ENCODE measurements at regions of chr14 and their contacts with region 1.

Region 1: GRCh38 chr14:31360919-31361662 is 59.3 kb downstream of the HEATR5A start:
- DNase-seq: no peak
- ATAC-seq: no peak
- H3K4me3 Mint-ChIP-seq: no peak overlapping the region
- H3K27ac Mint-ChIP-seq: no peak overlapping the region
- H3K4me1 Mint-ChIP-seq: peaks cover 5% of the 10 kb centered on the region
- H3K27me3 Mint-ChIP-seq: no peaks in the 10 kb centered on the region
- CTCF ChIP-seq: no peak

Region 2: GRCh38 chr14:30375296-30375892 is 985.7 kb before region 1 on chr14:
- CTCF ChIA-PET with region 1: no interaction called
- POLR2A ChIA-PET with region 1: no interaction called
- intact Hi-C with region 1: loop called (anchors 10 kb)
- DNase-seq: peak; percentile 24
- ATAC-seq: peak; percentile 71
- H3K4me3 Mint-ChIP-seq: no peak overlapping the region
- H3K27ac Mint-ChIP-seq: no peak overlapping the region
- H3K4me1 Mint-ChIP-seq: no peaks in the 10 kb centered on the region
- H3K27me3 Mint-ChIP-seq: peaks cover 8% of the 10 kb centered on the region
- CTCF ChIP-seq: no peak

Region 3: GRCh38 chr14:30906752-30907658 is 454.1 kb before region 1 on chr14:
- CTCF ChIA-PET with region 1: no interaction called
- POLR2A ChIA-PET with region 1: no interaction called
- intact Hi-C with region 1: loop called (anchors 10 kb)
- DNase-seq: no peak
- ATAC-seq: peak; percentile 28
- H3K4me3 Mint-ChIP-seq: no peak overlapping the region
- H3K27ac Mint-ChIP-seq: no peak overlapping the region
- H3K4me1 Mint-ChIP-seq: no peaks in the 10 kb centered on the region
- H3K27me3 Mint-ChIP-seq: no peaks in the 10 kb centered on the region
- CTCF ChIP-seq: no peak

Region 4: GRCh38 chr14:31084385-31084784 is 276.7 kb before region 1 on chr14:
- CTCF ChIA-PET with region 1: no interaction called
- POLR2A ChIA-PET with region 1: no interaction called
- intact Hi-C with region 1: loop called (anchors 2 kb)
- DNase-seq: peak; percentile 33
- ATAC-seq: peak; percentile 98
- H3K4me3 Mint-ChIP-seq: no peak overlapping the region
- H3K27ac Mint-ChIP-seq: no peak overlapping the region
- H3K4me1 Mint-ChIP-seq: peaks cover 9% of the 10 kb centered on the region
- H3K27me3 Mint-ChIP-seq: no peaks in the 10 kb centered on the region
- CTCF ChIP-seq: no peak

Region 5: GRCh38 chr14:31172084-31172483 is 189.0 kb before region 1 on chr14:
- CTCF ChIA-PET with region 1: no interaction called
- POLR2A ChIA-PET with region 1: no interaction called
- intact Hi-C with region 1: loop called (anchors 5 kb)
- DNase-seq: no peak
- ATAC-seq: no peak
- H3K4me3 Mint-ChIP-seq: no peak overlapping the region
- H3K27ac Mint-ChIP-seq: no peak overlapping the region
- H3K4me1 Mint-ChIP-seq: no peaks in the 10 kb centered on the region
- H3K27me3 Mint-ChIP-seq: no peaks in the 10 kb centered on the region
- CTCF ChIP-seq: no peak

Region 6: DNA sequence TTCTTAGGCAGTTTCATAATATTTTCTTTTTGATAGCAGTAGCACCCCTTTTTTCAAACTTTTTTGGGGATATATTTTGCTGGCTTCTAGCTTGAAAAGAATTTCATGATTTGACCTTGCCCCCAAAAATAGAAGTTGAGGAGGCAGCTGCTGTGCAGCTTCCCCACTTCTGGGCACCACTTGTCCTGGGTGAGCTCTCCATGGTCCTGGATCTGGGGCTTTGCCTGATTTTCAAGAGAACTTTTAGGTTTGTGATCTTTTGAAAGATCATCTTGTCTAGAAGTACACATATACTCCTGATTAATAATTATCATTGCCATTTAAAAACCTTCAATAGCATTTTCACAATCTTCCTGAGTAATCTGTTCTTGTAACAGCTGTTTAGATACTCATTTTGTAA is 1849.2 kb after region 1 on chr14:
- CTCF ChIA-PET with region 1: no interaction called
- POLR2A ChIA-PET with region 1: no interaction called
- intact Hi-C with region 1: no loop called
- DNase-seq: no peak
- ATAC-seq: no peak
- H3K4me3 Mint-ChIP-seq: no peak overlapping the region
- H3K27ac Mint-ChIP-seq: no peak overlapping the region
- H3K4me1 Mint-ChIP-seq: no peaks in the 10 kb centered on the region
- H3K27me3 Mint-ChIP-seq: no peaks in the 10 kb centered on the region
- CTCF ChIP-seq: no peak